IMR-90 (cell line): ENCODE measurements at regions of chr1 and their contacts with region 1.

Region 1: DNA sequence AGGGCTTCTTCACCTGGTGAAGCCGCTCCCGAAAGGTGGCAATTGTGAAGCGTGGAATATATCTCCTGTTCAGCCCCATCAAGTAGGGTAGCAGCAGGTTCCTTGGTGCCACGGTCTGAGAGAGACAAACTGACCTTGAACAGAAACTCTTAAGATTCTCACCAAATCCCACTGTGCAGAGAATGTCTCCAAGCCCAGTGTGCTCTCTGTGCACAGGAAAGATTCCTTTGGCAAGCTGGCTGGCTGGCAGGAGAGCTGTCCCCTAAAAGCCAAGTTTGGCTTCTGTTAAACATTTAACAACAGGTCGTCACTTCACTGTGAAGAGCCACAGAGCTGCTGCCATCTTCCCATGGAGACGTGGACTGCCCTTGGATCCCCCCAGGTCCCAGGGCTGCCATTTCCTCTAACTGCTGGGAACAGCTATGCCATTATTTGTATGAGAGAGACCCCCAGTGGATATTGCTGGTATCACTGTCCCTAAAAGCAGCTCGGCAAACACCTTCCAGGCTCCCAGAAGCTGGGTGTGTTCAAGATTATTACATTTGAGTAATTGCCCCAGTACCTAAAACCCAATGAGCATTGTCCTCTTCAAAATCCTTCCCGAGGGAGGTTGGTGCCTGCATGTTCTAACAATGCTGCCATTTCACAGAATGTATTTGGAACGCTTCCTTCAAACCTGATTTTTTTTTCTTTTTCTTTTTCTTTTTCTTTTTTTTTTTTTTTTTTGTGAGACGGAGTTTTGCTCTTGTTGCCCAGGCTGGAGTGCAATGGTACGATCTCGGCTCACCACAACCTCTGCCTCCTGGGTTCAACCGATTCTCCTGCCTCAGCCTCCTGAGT is 71.8 kb downstream of the CD58 start:
- DNase-seq: peak; percentile 61
- ATAC-seq: peak; percentile 97
- H3K4me3 ChIP-seq: no peak overlapping the region
- H3K27ac ChIP-seq: no peak overlapping the region
- H3K4me1 ChIP-seq: peaks cover 15% of the 10 kb centered on the region
- H3K27me3 ChIP-seq: no peaks in the 10 kb centered on the region
- CTCF ChIP-seq: peak; percentile 94
- POLR2A ChIP-seq: no peak
- RAD21 ChIP-seq: peak; percentile 92

Region 2: GRCh38 chr1:115807723-115808122 is 691.3 kb before region 1 on chr1:
- CTCF ChIA-PET with region 1: no interaction called
- POLR2A ChIA-PET with region 1: no interaction called
- dilution Hi-C with region 1: no loop called
- in situ Hi-C with region 1: loop called (anchors 10 kb)
- intact Hi-C with region 1: loop called (anchors 1 kb)
- DNase-seq: peak; percentile 66
- ATAC-seq: peak; percentile 87
- H3K4me3 ChIP-seq: no peak overlapping the region
- H3K27ac ChIP-seq: no peak overlapping the region
- H3K4me1 ChIP-seq: no peaks in the 10 kb centered on the region
- H3K27me3 ChIP-seq: peaks cover 4% of the 10 kb centered on the region
- CTCF ChIP-seq: peak; percentile 73
- POLR2A ChIP-seq: no peak
- RAD21 ChIP-seq: peak; percentile 62

Region 3: GRCh38 chr1:116133696-116134650 is 365.0 kb before region 1 on chr1:
- CTCF ChIA-PET with region 1: interaction called, 54 read pairs
- POLR2A ChIA-PET with region 1: no interaction called
- dilution Hi-C with region 1: no loop called
- in situ Hi-C with region 1: loop called (anchors 10 kb)
- intact Hi-C with region 1: loop called (anchors 1 kb)
- DNase-seq: no peak
- ATAC-seq: no peak
- H3K4me3 ChIP-seq: no peak overlapping the region
- H3K27ac ChIP-seq: no peak overlapping the region
- H3K4me1 ChIP-seq: no peaks in the 10 kb centered on the region
- H3K27me3 ChIP-seq: peaks cover 26% of the 10 kb centered on the region
- CTCF ChIP-seq: 0 out of 2 replicates have a peak, but pooled peaks have one; percentile 16
- POLR2A ChIP-seq: no peak
- RAD21 ChIP-seq: no peak

Region 4: GRCh38 chr1:116139592-116140134 is 359.3 kb before region 1 on chr1:
- CTCF ChIA-PET with region 1: interaction called, 54 read pairs
- POLR2A ChIA-PET with region 1: no interaction called
- dilution Hi-C with region 1: no loop called
- in situ Hi-C with region 1: loop called (anchors 10 kb)
- intact Hi-C with region 1: loop called (anchors 1 kb)
- DNase-seq: no peak
- ATAC-seq: no peak
- H3K4me3 ChIP-seq: no peak overlapping the region
- H3K27ac ChIP-seq: no peak overlapping the region
- H3K4me1 ChIP-seq: no peaks in the 10 kb centered on the region
- H3K27me3 ChIP-seq: no peaks in the 10 kb centered on the region; the same call in 1 of the 2 replicates
- CTCF ChIP-seq: no peak
- POLR2A ChIP-seq: no peak
- RAD21 ChIP-seq: no peak

Region 5: DNA sequence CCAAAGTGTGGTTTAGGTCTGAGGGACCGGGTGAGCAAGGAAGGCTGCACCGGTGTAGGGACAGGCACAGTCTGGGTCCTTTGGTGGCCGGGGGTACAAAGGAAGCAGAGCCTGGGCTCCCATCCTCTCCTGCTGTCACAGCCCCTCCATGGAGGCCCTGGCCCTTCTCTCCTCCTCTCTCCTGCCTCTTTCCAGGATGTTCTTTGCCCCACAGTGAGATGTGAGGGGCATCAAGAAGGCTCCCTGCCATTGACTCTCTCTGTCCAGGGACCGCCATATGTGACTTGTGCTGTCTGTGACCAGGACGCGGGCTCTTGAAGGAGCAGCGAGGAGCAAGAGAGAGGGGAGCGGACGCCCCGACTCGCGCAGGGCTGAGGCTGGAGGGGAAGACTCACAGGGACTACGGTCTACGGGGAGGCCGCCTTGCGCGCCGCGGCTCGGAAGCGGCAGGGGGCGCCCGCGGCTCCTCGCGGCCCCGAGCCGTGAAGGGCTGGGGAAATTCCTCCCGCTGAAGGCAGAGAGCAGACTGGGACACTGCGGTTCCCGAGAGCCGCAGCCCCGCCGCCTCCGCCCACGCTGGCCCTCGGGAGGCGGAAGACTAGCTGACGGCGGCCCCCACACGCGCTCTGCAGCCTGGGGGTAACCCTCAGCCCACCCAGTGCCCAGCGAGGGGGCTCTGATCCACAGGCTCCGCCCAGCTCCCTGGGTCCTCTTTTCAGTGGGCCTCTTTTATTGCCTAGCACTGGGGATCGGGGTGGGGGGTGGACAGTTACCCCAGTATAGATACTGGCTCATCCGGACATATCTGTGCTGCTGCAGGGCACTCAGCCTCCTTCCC is 347.1 kb before region 1 on chr1:
- CTCF ChIA-PET with region 1: interaction called, 10 read pairs
- POLR2A ChIA-PET with region 1: no interaction called
- dilution Hi-C with region 1: no loop called
- in situ Hi-C with region 1: no loop called
- intact Hi-C with region 1: loop called (anchors 1 kb)
- DNase-seq: peak; percentile 51
- ATAC-seq: peak; percentile 100
- H3K4me3 ChIP-seq: peak overlapping the region; percentile 44
- H3K27ac ChIP-seq: no peak overlapping the region
- H3K4me1 ChIP-seq: no peaks in the 10 kb centered on the region
- H3K27me3 ChIP-seq: peaks cover 23% of the 10 kb centered on the region
- CTCF ChIP-seq: peak; percentile 87
- POLR2A ChIP-seq: no peak
- RAD21 ChIP-seq: peak; percentile 72

Region 6: DNA sequence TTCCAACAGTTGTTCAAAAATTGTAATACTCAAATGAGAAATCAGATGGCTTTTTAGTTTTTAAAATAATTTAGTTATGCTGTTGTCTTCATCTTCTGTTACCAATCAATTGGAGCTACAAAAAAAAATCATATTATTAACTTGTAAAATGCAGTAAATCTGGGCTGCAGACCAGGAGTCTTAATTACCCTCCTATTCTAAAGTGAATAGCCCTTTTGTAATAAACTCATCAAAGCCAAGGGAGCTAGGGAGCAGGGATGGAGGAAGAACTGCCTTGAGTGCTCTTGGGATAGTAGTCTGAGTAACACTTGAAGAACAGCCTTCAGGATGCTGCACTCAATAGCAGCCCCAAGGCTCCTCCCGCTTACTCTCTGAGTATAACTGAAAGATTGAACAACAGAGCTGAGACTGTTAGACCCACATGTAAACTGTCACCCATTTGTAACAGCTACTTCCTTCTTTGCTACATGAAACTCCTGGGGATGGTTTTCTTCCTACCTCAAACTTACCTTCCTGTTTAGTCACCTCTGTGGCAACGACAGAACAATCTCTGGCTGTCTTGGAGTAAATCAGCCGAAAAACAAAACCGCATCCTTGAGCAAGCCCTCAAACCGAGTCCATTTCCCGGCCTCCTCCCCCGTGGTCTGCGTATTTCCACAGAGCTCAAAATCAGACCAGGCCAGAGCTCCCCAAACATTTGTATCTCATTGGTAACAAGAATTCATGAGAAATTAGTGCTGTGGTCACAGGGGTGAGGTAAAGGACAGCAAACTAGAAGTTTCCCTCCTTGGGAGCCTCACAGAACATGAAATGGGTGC is 15.9 kb after region 1 on chr1:
- CTCF ChIA-PET with region 1: interaction called, 12 read pairs
- POLR2A ChIA-PET with region 1: no interaction called
- dilution Hi-C with region 1: no loop called
- in situ Hi-C with region 1: no loop called
- intact Hi-C with region 1: no loop called
- DNase-seq: no peak
- ATAC-seq: no peak; the same call in 1 of the 2 replicates
- H3K4me3 ChIP-seq: no peak overlapping the region
- H3K27ac ChIP-seq: no peak overlapping the region
- H3K4me1 ChIP-seq: no peaks in the 10 kb centered on the region
- H3K27me3 ChIP-seq: no peaks in the 10 kb centered on the region
- CTCF ChIP-seq: no peak
- POLR2A ChIP-seq: no peak
- RAD21 ChIP-seq: no peak